GM13977 (cell line): ENCODE measurements at regions of chr1 and their contacts with region 1.

Region 1: GRCh38 chr1:161749509-161750407 is at the start of gene DUSP12:
- DNase-seq: peak; percentile 82
- CTCF ChIP-seq: peak; percentile 56

Region 2: GRCh38 chr1:161367684-161368400 is 381.9 kb before region 1 on chr1 and contains the start of gene CFAP126:
- in situ Hi-C with region 1: no loop called
- DNase-seq: peak; percentile 84
- CTCF ChIP-seq: peak; percentile 28

Region 3: DNA sequence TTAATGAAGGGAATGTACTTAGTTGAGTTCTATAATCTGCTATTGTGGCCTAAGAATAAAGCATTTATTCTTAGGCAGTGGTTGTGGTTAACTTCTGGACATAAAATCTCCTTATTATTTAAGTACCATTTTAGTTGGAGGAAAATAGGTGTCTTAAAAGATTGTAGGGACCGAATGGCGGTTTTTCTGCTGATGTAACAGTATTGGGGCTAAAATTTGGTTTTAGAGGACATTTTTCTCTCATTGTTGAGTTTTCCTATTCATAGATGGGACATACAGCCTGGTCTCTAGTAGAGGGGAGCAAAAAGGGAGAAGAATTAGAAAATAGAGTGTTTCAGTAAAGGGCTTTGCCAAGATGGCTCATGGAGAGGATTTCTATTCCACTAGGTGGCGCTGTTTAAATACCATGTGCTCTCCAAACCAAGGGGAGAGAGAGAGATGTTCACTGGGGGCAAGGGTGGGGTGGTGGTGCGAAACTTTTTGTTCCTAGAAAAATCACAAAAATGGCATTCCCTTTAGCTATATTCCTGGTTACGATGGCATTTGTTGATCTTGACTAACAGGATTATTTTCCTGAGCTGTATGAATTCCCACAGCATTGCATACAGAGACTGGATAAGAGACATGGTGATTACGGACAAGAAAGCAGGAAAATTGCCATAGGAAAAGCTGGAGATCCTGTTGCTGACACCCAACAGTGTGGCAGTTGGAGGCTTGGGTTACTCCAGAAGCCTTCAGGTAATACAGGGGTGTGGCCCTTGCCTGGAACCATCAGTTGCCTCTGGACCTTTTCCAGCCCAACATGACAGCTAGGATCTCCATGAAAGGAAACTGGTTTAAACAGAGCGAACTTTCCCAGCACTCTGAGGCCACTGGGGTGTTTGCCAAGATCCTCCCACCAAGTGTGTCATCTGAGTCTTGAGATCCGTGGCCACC is 262.7 kb before region 1 on chr1:
- in situ Hi-C with region 1: loop called (anchors 10 kb)
- DNase-seq: peak; percentile 71
- CTCF ChIP-seq: peak; percentile 77

Region 4: GRCh38 chr1:161631076-161631475 is 118.7 kb before region 1 on chr1 and contains the start of gene FCGR3B:
- in situ Hi-C with region 1: loop called (anchors 25 kb)
- DNase-seq: no peak
- CTCF ChIP-seq: no peak

Region 5: GRCh38 chr1:162151900-162152829 is 402.4 kb after region 1 on chr1:
- in situ Hi-C with region 1: no loop called
- DNase-seq: peak; percentile 64
- CTCF ChIP-seq: no peak

Region 6: DNA sequence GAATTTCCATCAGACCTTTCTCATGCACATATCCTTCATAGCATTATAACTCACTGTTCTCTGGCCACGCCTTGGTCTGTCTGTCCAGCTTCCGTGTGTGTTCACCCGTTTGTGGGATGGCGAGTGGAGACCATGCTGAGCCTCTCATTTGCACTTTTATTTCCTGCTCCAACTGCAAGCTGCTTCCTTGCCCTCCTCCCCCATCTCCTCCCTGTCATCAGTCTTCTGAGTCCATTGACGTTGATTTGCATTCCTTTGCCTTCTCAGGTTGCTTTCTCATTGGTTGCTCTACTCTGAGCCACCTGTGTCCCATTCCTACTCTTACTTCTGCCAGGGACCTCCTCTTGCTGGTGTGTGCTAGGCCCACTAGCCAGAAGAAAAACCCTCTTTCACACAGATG is 466.1 kb after region 1 on chr1:
- in situ Hi-C with region 1: no loop called
- DNase-seq: no peak
- CTCF ChIP-seq: no peak

Region 7: GRCh38 chr1:162578071-162578700 is 828.4 kb after region 1 on chr1:
- in situ Hi-C with region 1: no loop called
- DNase-seq: no peak
- CTCF ChIP-seq: no peak